RWPE1 (cell line): ENCODE measurements at regions of chr16 and their contacts with region 1.

Region 1: GRCh38 chr16:86626966-86627365 is 48.6 kb downstream of the FOXL1 start:
- DNase-seq: no peak
- H3K27ac ChIP-seq: no peak overlapping the region
- CTCF ChIP-seq: no peak

Region 2: GRCh38 chr16:86575754-86576557 is 51.0 kb before region 1 on chr16:
- CTCF ChIA-PET with region 1: no interaction called
- POLR2A ChIA-PET with region 1: interaction called, 13 read pairs
- DNase-seq: peak; percentile 96
- H3K27ac ChIP-seq: peak overlapping the region; percentile 91
- CTCF ChIP-seq: peak; percentile 88

Region 3: GRCh38 chr16:86609115-86609514 is 17.9 kb before region 1 on chr16:
- CTCF ChIA-PET with region 1: no interaction called
- POLR2A ChIA-PET with region 1: no interaction called
- DNase-seq: no peak
- H3K27ac ChIP-seq: no peak overlapping the region
- CTCF ChIP-seq: no peak